Activated naive CD4-positive, alpha-beta T cell treated with anti-CD3 and anti-CD28 coated beads for 36 hours (primary cell): ENCODE measurements at regions of chr3 and their contacts with region 1.

Region 1: GRCh38 chr3:108090701-108091451 is at the start of gene CD47:
- DNase-seq: peak; percentile 94
- H3K4me3 Mint-ChIP-seq: peak within 1 kb of the TSS; percentile 97
- H3K27ac Mint-ChIP-seq: peak within 1 kb of the TSS; percentile 98
- H3K4me1 Mint-ChIP-seq: peaks cover 25% of the 10 kb centered on the region
- H3K27me3 Mint-ChIP-seq: no peaks in the 10 kb centered on the region
- total RNA-seq, gene CD47: 60.2 to 63.7 TPM

Region 2: GRCh38 chr3:107522510-107523288 is 568.2 kb before region 1 on chr3 and contains the start of gene BBX:
- CTCF ChIA-PET with region 1: no interaction called
- intact Hi-C with region 1: loop called (anchors 2 kb)
- DNase-seq: peak; percentile 94
- H3K4me3 Mint-ChIP-seq: peak within 1 kb of the TSS; percentile 92
- H3K27ac Mint-ChIP-seq: peak within 1 kb of the TSS; percentile 94
- H3K4me1 Mint-ChIP-seq: peaks cover 23% of the 10 kb centered on the region
- H3K27me3 Mint-ChIP-seq: no peaks in the 10 kb centered on the region
- total RNA-seq, gene BBX: 43.1 to 48.6 TPM

Region 3: DNA sequence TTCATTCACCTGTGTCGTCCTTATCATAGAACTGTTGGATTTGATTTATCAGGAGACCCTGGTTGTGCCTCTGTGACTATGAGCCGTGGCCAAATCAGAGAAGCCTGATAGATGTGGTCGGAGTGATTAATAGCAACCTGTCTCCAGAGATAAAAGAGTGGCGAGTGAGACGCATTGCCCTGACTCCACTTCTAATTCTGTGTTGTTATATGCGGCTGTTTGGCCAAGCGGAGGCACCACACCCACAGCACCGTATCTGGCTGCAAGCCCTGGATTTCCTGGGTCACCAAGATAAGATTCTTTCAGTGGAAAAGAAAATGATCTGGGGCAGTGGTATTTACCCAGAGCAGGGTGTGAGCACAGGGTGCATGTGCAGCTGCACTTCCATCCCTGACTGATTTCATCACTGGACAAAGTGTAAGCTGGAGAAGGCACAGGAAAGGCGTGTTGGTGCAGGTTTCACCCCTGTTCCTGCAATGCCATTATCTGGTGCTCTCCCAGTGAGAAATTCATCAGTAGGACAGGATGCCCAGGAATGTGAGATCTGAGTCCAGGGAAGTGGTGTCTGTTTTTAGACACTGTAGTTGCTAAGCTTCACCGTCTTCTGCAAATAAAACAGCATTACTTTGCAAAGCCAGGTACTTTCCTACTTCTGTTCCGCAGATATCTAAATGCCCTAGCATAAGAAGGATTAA is 84.7 kb before region 1 on chr3:
- CTCF ChIA-PET with region 1: no interaction called
- intact Hi-C with region 1: no loop called
- DNase-seq: no peak
- H3K4me3 Mint-ChIP-seq: no peak overlapping the region
- H3K27ac Mint-ChIP-seq: no peak overlapping the region
- H3K4me1 Mint-ChIP-seq: peaks cover 3% of the 10 kb centered on the region
- H3K27me3 Mint-ChIP-seq: peaks cover 6% of the 10 kb centered on the region

Region 4: GRCh38 chr3:108079877-108080659 is 10.8 kb before region 1 on chr3:
- CTCF ChIA-PET with region 1: no interaction called
- intact Hi-C with region 1: loop called (anchors 1 kb)
- DNase-seq: no peak
- H3K4me3 Mint-ChIP-seq: no peak overlapping the region
- H3K27ac Mint-ChIP-seq: peak overlapping the region; percentile 2
- H3K4me1 Mint-ChIP-seq: peaks cover 65% of the 10 kb centered on the region
- H3K27me3 Mint-ChIP-seq: no peaks in the 10 kb centered on the region

Region 5: DNA sequence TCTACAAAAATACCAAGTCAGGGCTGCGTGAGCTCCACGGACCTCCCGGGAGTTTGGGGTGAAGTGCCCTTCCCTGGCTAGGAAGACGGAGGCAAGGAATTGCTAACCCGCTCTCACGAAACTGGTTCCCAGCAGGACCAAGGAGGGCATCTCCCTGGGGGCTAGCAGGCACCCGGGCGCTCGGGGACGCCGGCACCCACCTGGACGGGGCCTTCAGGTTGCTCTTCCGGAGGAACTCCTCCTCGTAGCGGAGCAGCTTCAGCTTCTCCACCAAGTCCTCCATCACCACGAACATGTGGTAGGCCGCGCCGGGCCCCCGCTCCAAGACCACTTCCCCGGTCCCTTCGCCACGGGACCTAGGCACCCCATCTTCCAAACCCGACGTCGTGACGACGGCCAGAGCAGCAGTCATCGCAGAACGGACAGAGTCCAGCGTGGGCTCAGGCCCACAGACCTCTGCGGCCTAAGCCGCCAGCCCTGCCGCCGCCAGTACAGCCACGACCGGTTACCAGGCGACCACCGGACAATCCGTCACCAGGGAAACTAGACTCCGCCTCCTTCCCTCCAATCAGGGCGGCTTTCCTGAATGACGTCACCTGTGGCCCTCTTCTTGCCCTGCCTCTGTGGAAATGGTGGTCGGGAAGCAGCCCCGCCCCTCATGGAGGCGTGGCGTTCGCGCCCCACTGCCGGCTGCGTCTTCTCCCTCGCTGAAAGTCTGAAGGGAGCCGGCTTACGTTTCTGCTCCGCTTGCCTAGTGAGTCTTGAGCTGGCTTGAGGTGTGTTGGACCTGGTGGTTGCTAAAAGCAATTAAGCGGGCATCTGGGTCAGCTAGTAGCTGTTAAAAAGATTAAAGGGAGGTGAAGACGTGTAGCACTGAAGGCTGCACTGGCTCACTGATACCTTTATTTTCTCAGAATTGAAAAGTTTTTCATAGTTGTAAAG is 131.3 kb after region 1 on chr3 and contains the start of gene IFT57:
- CTCF ChIA-PET with region 1: interaction called, 5 read pairs
- intact Hi-C with region 1: loop called (anchors 1 kb)
- DNase-seq: peak; percentile 95
- H3K4me3 Mint-ChIP-seq: peak within 1 kb of the TSS; percentile 97
- H3K27ac Mint-ChIP-seq: peak within 1 kb of the TSS; percentile 97
- H3K4me1 Mint-ChIP-seq: peaks cover 42% of the 10 kb centered on the region
- H3K27me3 Mint-ChIP-seq: no peaks in the 10 kb centered on the region
- total RNA-seq, gene IFT57: 26.2 to 27.7 TPM

Region 6: DNA sequence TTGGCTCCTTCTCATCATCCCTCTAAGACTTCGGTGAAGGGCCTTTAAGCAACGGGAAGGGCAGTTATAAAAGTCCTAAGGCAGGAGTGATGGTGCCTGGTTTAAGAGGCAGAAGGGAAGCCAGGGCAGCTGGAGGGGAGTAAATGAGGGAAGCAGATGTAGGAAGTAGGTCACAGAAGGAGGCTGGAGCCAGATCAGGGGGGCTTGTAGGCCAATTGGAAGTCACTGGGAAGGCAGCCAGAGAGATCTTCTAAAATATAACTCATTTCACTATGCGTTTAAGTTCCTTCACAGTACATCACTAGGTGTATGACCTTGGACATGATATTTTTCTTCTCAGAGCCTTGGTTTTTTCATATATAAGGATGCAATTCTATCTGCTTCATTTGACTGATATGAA is 324.8 kb after region 1 on chr3:
- CTCF ChIA-PET with region 1: no interaction called
- intact Hi-C with region 1: loop called (anchors 2 kb)
- DNase-seq: no peak
- H3K4me3 Mint-ChIP-seq: no peak overlapping the region
- H3K27ac Mint-ChIP-seq: no peak overlapping the region
- H3K4me1 Mint-ChIP-seq: peaks cover 18% of the 10 kb centered on the region
- H3K27me3 Mint-ChIP-seq: peaks cover 12% of the 10 kb centered on the region

Region 7: DNA sequence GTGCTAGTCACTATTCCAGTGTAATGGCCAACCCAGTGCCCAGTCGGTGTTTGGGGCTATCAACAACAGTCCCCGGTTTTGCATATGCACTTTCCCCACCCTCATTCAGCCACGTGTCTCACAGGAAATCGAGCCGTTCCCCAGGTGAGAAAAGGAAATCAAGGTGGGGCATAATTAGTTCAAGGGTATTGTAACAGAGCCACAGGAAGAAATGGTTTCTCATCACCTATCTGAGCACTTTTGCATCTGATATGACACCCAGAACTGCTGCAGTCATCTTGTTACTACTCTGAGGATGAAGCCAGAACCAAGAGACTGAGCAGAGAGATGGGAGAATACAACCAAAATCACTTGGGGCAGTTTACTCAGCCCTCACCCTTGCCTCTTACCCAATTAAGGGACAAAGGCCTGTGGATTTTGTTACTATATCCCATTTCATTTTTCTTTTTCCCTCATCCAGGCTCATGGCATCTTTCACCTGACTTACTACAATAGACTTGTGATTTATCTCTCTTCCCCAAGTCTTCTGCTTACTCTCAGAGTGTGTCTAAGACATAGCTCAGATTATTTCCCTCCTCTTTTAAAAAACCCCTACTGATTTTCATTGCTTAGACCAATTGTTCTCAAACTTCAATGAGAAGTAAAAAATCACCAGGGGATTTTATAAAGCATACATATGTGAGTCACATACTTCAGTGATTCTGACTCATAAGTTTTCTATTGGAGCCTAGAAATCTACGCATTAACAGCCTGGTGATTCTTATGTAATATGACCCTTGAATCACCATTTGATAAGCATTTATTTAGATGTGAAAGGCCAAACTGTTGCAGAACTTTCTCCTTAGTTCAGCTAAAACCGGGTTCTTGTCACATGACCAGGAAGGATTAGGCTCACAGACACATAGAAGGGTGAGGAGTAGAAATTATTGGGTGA is 772.3 kb after region 1 on chr3:
- CTCF ChIA-PET with region 1: no interaction called
- intact Hi-C with region 1: loop called (anchors 1 kb)
- DNase-seq: peak; percentile 79
- H3K4me3 Mint-ChIP-seq: peak overlapping the region; percentile 63
- H3K27ac Mint-ChIP-seq: peak overlapping the region; percentile 100
- H3K4me1 Mint-ChIP-seq: peaks cover 51% of the 10 kb centered on the region
- H3K27me3 Mint-ChIP-seq: no peaks in the 10 kb centered on the region